Activated CD4-positive, alpha-beta T cell treated with anti-CD3 and anti-CD28 coated beads, Interleukin-2, amount 10 ng/mL, durations not matched to agents 24 days and 14 days (primary cell): ENCODE measurements at regions of chr1 and their contacts with region 1.

Region 1: DNA sequence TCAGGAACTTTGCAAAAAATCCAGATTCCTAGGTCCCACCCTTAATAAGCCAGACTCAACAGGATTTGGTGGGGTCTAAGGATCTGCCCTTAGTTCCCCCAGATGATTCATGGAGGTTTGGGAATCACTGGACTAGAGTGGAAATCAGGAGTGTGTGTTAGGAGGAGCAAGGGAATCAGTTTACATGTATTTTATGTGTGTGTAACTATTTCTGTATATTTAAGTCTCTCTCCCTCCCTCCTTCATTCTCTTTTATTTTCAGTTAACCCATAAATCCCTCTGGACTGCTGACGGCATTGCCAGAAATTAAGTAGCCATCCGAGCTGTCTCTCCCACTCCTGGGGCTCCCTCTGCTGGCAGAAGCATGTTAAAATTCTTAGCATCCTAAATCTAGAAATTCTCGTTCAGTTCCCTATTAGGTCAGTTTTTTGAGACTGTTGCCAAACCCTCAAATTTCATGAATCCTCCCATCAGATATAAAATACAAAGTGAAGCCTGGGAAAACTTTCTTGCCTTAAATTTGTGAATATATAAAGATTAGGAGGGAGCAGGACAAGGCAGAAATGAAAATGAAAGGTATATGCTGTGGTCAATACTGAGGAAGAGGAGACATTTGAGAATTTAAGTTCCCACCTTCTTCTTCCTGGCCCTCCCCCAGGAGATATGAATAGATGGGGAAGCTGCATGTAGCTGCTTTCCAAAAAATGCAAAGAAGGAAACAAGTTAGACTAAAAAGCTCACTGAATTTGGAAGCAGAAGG is 11.7 kb upstream of the HSD11B1 start:
- DNase-seq: peak; percentile 92
- H3K4me3 Mint-ChIP-seq: peak overlapping the region; percentile 37
- H3K27ac Mint-ChIP-seq: peak overlapping the region; percentile 57
- H3K4me1 Mint-ChIP-seq: peaks cover 62% of the 10 kb centered on the region
- H3K27me3 Mint-ChIP-seq: no peaks in the 10 kb centered on the region

Region 2: GRCh38 chr1:209576798-209577197 is 116.1 kb before region 1 on chr1:
- intact Hi-C with region 1: loop called (anchors 2 kb)
- DNase-seq: peak; percentile 92
- H3K4me3 Mint-ChIP-seq: no peak overlapping the region
- H3K27ac Mint-ChIP-seq: no peak overlapping the region
- H3K4me1 Mint-ChIP-seq: peaks cover 5% of the 10 kb centered on the region
- H3K27me3 Mint-ChIP-seq: peaks cover 33% of the 10 kb centered on the region

Region 3: DNA sequence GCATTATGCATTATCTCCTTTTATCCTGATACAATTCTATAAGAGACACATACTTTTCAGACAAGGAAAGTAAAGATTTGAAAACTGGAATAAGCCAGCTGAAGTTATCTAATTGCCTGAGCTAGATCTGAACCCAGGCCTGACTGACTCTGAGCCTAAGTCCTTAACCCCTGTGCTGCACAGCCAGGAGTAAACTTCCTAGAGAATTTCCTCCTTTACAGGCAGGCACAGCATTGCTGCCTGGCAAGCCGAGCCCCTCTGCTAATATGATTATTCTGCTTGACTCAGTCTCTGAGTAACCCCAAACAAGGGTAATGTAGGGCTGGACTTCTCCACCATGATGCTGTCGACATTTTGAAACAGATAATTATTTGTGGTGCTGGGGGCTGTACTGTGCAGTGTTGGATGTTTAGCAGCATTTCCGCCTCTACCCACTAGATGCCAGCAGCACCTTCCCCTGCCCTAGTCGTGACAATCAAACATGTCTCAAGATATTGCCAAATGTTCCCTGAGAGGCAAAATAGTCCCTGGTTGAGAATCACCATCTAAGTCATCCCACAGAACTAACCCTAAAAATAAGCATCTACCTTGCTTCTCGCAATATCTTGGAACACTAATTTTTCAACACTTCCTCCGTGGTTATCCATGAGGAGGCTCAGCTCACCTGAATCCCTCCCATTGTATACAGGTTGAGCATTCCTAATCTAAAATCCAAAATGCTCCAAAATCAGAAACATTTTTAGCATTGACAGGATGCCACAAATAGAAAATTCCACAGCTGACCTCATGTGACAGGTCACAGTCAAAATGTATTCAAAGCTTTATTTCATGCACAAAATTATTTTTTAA is 90.9 kb before region 1 on chr1:
- intact Hi-C with region 1: loop called (anchors 1 kb)
- DNase-seq: peak; percentile 77
- H3K4me3 Mint-ChIP-seq: no peak overlapping the region
- H3K27ac Mint-ChIP-seq: no peak overlapping the region
- H3K4me1 Mint-ChIP-seq: peaks cover 8% of the 10 kb centered on the region
- H3K27me3 Mint-ChIP-seq: peaks cover 32% of the 10 kb centered on the region

Region 4: DNA sequence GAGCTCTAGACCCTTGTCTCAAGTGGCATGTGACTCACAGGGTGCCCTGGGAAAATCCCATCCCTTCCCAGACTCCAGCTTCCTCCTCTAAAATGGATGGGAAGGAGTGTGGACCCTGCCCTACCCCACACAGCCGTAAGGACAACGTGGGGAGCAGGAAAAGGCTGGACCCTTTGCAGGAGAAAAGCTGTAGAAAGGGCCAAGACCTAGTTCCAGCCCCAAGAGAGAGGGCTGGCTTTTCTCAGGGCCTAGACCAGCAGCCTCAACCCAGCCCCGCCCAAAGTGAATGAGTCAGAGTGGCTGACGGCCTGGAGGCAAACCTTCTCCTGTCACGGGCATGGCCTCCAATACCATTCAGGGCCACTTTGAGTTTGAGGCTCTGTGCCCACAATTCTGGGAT is 41.8 kb before region 1 on chr1:
- intact Hi-C with region 1: loop called (anchors 2 kb)
- DNase-seq: peak; percentile 92
- H3K4me3 Mint-ChIP-seq: peak overlapping the region; percentile 56
- H3K27ac Mint-ChIP-seq: peak overlapping the region; percentile 73
- H3K4me1 Mint-ChIP-seq: peaks cover 64% of the 10 kb centered on the region
- H3K27me3 Mint-ChIP-seq: no peaks in the 10 kb centered on the region

Region 5: DNA sequence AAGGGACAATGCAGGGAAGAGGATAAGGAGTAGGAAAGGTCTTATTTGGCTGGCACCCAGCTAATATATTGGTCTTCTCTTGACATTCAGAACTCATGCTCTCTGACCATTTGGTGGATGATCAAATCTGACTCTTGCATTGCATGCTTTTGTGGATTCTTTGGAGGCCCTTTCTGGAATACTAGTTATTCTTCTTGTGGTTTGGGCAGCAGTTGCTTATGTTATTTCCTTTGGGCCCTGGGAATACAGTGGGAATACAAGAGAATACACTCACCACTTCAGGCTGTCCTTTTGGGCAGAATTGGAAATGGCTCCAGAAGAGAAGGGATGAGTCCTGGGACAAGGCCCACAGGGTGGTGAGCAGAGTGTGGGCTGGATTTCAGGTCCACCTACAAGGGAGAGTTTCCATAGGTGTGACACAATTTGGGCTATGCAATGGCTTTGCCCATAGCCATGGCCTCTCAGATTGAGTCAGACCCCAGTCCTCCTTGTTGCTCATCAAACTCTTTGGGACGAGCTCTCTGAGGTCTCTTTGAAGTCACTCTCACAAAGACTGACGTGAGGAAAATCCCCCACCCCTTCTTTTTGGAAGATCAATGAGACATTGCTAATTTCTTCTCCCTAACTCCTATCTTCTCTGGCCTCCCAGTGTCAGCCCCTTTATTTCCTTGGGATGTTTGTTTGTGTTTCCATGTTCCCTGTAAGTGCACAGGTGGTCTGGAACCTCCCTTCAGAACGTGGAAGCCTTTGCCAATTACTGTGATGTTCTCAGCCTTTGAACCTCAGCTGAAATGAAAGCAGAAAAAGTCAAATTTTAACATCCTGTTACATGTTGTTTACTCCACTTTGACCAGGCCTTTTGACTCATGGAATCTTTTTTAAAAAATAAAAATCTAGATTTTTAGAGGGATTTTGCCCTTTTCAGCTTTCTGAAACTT is 31.1 kb after region 1 on chr1:
- intact Hi-C with region 1: no loop called
- DNase-seq: peak; percentile 83
- H3K4me3 Mint-ChIP-seq: peak overlapping the region; percentile 47
- H3K27ac Mint-ChIP-seq: peak overlapping the region; percentile 100
- H3K4me1 Mint-ChIP-seq: peaks cover 55% of the 10 kb centered on the region
- H3K27me3 Mint-ChIP-seq: no peaks in the 10 kb centered on the region